Activated CD4-positive, alpha-beta T cell treated with anti-CD3 and anti-CD28 coated beads for 36 hours (primary cell): ENCODE measurements at regions of chr6 and their contacts with region 1.

Region 1: DNA sequence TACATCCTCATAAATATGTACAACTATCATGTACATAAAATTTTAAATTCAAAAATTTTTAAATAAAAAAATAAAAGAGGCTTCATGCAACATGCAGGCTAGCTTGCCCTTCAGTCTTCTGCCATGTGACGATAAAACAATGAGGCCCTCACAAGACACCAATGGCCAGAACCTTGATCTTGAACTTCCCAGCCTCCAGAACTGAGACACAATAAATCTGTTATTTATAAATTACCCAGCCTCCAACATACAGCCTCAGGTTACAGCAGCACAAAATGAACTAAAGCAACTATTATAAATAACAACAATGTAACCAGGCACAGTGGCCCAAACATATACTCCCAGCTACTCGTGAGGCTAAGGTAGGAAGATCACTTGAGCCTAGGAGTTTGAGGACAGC is 42.8 kb downstream of the SERAC1 start:
- DNase-seq: no peak
- ATAC-seq: no peak
- H3K4me3 Mint-ChIP-seq: no peak overlapping the region
- H3K27ac Mint-ChIP-seq: no peak overlapping the region
- H3K4me1 Mint-ChIP-seq: no peaks in the 10 kb centered on the region
- H3K27me3 Mint-ChIP-seq: no peaks in the 10 kb centered on the region

Region 2: GRCh38 chr6:157921685-157922367 is 203.4 kb before region 1 on chr6:
- CTCF ChIA-PET with region 1: no interaction called
- POLR2A ChIA-PET with region 1: no interaction called
- intact Hi-C with region 1: loop called in 1 of 2 experiments (anchors 5 kb)
- DNase-seq: no peak
- ATAC-seq: no peak
- H3K4me3 Mint-ChIP-seq: no peak overlapping the region
- H3K27ac Mint-ChIP-seq: no peak overlapping the region
- H3K4me1 Mint-ChIP-seq: peaks cover 4% of the 10 kb centered on the region
- H3K27me3 Mint-ChIP-seq: no peaks in the 10 kb centered on the region